CD8-positive, alpha-beta T cell (primary cell): ENCODE measurements at regions of chr2 and their contacts with region 1.

Region 1: GRCh38 chr2:28452534-28453081 is 43.3 kb upstream of the PLB1 start:
- DNase-seq: peak; percentile 60 to 89 (median 80)
- ATAC-seq: peak; percentile 91
- H3K4me3 ChIP-seq: no peak overlapping the region
- H3K4me3 Mint-ChIP-seq: no peak overlapping the region
- H3K27ac ChIP-seq: no peak overlapping the region
- H3K27ac Mint-ChIP-seq: no peak overlapping the region
- H3K4me1 ChIP-seq: no peaks in the 10 kb centered on the region
- H3K4me1 Mint-ChIP-seq: peaks cover 2% of the 10 kb centered on the region
- H3K27me3 ChIP-seq: no peaks in the 10 kb centered on the region
- H3K27me3 Mint-ChIP-seq: no peaks in the 10 kb centered on the region
- CTCF ChIP-seq: peak; percentile 80

Region 2: GRCh38 chr2:27703638-27704341 is 748.8 kb before region 1 on chr2:
- CTCF ChIA-PET with region 1: interaction called, 10 read pairs
- POLR2A ChIA-PET with region 1: no interaction called
- intact Hi-C with region 1: loop called (anchors 1 kb)
- DNase-seq: peak; percentile 73 to 90 (median 84)
- ATAC-seq: peak; percentile 84
- H3K4me3 ChIP-seq: no peak overlapping the region
- H3K4me3 Mint-ChIP-seq: no peak overlapping the region
- H3K27ac ChIP-seq: no peak overlapping the region
- H3K27ac Mint-ChIP-seq: no peak overlapping the region
- H3K4me1 ChIP-seq: no peaks in the 10 kb centered on the region
- H3K4me1 Mint-ChIP-seq: peaks cover 3% of the 10 kb centered on the region
- H3K27me3 ChIP-seq: no peaks in the 10 kb centered on the region
- H3K27me3 Mint-ChIP-seq: no peaks in the 10 kb centered on the region
- CTCF ChIP-seq: peak; percentile 84

Region 3: DNA sequence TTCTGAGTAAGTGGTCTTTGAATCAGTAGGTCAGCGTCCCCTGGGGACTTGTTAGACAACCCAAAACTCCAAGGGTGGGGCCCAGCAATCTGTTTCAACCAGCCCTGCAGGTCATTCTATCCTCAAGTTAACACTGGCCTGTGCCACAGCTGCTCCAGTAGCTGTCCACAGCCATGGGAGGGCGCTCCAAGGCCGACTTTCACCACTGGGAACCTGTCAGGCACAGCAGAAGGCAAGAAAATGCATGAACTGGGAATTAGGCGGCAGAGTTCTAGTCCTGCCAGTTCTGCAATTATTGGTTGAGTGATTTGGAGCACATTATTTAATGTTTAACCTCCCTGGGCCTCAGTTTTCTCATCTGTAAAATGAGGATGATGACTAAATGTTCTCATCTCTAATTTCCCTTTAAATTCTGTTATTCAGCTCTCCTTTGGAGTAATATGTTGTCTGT is 698.4 kb before region 1 on chr2:
- CTCF ChIA-PET with region 1: interaction called, 6 read pairs
- POLR2A ChIA-PET with region 1: no interaction called
- intact Hi-C with region 1: loop called in 1 of 2 experiments (anchors 1 kb)
- DNase-seq: peak; percentile 34 to 73 (median 63)
- ATAC-seq: peak; percentile 66
- H3K4me3 ChIP-seq: no peak overlapping the region
- H3K4me3 Mint-ChIP-seq: no peak overlapping the region
- H3K27ac ChIP-seq: no peak overlapping the region
- H3K27ac Mint-ChIP-seq: no peak overlapping the region
- H3K4me1 ChIP-seq: no peaks in the 10 kb centered on the region
- H3K4me1 Mint-ChIP-seq: no peaks in the 10 kb centered on the region
- H3K27me3 ChIP-seq: no peaks in the 10 kb centered on the region
- H3K27me3 Mint-ChIP-seq: peaks cover 12% of the 10 kb centered on the region
- CTCF ChIP-seq: peak; percentile 57

Region 4: DNA sequence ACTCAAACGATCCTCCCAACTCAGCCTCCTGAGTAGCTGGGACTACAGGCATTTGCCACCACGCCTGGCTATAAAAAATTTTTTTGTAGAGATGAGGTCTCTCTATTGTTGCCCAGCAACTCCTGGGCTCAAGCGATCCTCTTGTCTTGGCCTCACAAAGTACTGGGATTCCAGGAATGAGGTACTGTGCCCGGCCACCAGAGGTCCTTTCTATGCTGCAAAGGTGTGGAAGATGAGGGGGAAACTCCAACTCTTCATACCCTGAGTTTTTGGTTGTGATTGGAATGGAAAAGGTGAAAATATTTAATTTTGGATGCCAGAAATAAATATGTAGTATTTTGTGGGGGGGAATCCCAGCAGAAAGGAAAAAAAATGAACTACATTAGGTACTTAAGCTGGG is 645.1 kb before region 1 on chr2:
- CTCF ChIA-PET with region 1: no interaction called
- POLR2A ChIA-PET with region 1: no interaction called
- intact Hi-C with region 1: loop called in 1 of 2 experiments (anchors 5 kb)
- DNase-seq: peak in 3 of 9 experiments; percentile 11 to 30 (median 12)
- ATAC-seq: no peak
- H3K4me3 ChIP-seq: no peak overlapping the region
- H3K4me3 Mint-ChIP-seq: no peak overlapping the region
- H3K27ac ChIP-seq: no peak overlapping the region
- H3K27ac Mint-ChIP-seq: no peak overlapping the region
- H3K4me1 ChIP-seq: no peaks in the 10 kb centered on the region
- H3K4me1 Mint-ChIP-seq: no peaks in the 10 kb centered on the region
- H3K27me3 ChIP-seq: no peaks in the 10 kb centered on the region
- H3K27me3 Mint-ChIP-seq: no peaks in the 10 kb centered on the region
- CTCF ChIP-seq: no peak

Region 5: GRCh38 chr2:28155627-28156026 is 297.0 kb before region 1 on chr2:
- CTCF ChIA-PET with region 1: no interaction called
- POLR2A ChIA-PET with region 1: no interaction called
- intact Hi-C with region 1: loop called in 1 of 2 experiments (anchors 10 kb)
- DNase-seq: peak in 2 of 9 experiments; percentile 5 to 16
- ATAC-seq: no peak
- H3K4me3 ChIP-seq: no peak overlapping the region
- H3K4me3 Mint-ChIP-seq: no peak overlapping the region
- H3K27ac ChIP-seq: no peak overlapping the region
- H3K27ac Mint-ChIP-seq: no peak overlapping the region
- H3K4me1 ChIP-seq: no peaks in the 10 kb centered on the region
- H3K4me1 Mint-ChIP-seq: no peaks in the 10 kb centered on the region
- H3K27me3 ChIP-seq: no peaks in the 10 kb centered on the region
- H3K27me3 Mint-ChIP-seq: no peaks in the 10 kb centered on the region
- CTCF ChIP-seq: peak; percentile 38

Region 6: GRCh38 chr2:28178946-28179345 is 273.7 kb before region 1 on chr2:
- CTCF ChIA-PET with region 1: no interaction called
- POLR2A ChIA-PET with region 1: no interaction called
- intact Hi-C with region 1: loop called in 1 of 2 experiments (anchors 2 kb)
- DNase-seq: no peak
- ATAC-seq: no peak
- H3K4me3 ChIP-seq: no peak overlapping the region
- H3K4me3 Mint-ChIP-seq: no peak overlapping the region
- H3K27ac ChIP-seq: no peak overlapping the region
- H3K27ac Mint-ChIP-seq: no peak overlapping the region
- H3K4me1 ChIP-seq: no peaks in the 10 kb centered on the region
- H3K4me1 Mint-ChIP-seq: no peaks in the 10 kb centered on the region
- H3K27me3 ChIP-seq: no peaks in the 10 kb centered on the region
- H3K27me3 Mint-ChIP-seq: no peaks in the 10 kb centered on the region
- CTCF ChIP-seq: no peak

Region 7: DNA sequence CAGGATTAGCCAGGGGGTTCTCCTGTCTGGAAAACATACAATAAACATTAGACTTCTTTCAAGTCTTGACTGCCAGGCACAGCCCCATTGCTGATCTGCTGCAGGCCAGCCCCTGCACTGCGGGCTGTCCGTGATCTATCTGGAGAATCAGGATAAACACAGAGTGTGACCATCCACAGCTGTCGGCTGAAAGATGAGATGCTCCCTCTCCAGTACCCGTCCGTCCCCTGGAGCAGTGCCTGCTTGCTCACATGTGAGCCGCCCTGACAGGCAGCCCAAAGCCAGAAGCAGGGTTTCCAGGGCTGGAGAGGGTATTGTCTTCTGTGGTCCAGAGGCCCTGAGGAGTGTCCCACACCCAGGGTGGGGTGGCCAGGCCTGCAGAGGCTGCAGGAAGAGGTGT is 106.0 kb before region 1 on chr2:
- CTCF ChIA-PET with region 1: no interaction called
- POLR2A ChIA-PET with region 1: no interaction called
- intact Hi-C with region 1: loop called in 1 of 2 experiments (anchors 5 kb)
- DNase-seq: peak in 1 of 9 experiments; percentile 6
- ATAC-seq: no peak
- H3K4me3 ChIP-seq: no peak overlapping the region
- H3K4me3 Mint-ChIP-seq: no peak overlapping the region
- H3K27ac ChIP-seq: no peak overlapping the region
- H3K27ac Mint-ChIP-seq: peak overlapping the region; percentile 60
- H3K4me1 ChIP-seq: peaks cover 25% of the 10 kb centered on the region
- H3K4me1 Mint-ChIP-seq: peaks cover 26% of the 10 kb centered on the region
- H3K27me3 ChIP-seq: no peaks in the 10 kb centered on the region
- H3K27me3 Mint-ChIP-seq: no peaks in the 10 kb centered on the region
- CTCF ChIP-seq: no peak